SK-N-SH (cell line): ENCODE measurements at regions of chr4 and their contacts with region 1.

Region 1: GRCh38 chr4:139887962-139888735 is 222.5 kb downstream of the MGST2 start:
- DNase-seq: peak; percentile 23
- H3K4me3 ChIP-seq: peak overlapping the region in 1 of 2 experiments; percentile 22; a peak in 1 of 4 replicates
- H3K27ac ChIP-seq: peak overlapping the region; percentile 54 to 98
- H3K4me1 ChIP-seq: peaks cover 36 to 37% of the 10 kb centered on the region in 2 experiments
- H3K27me3 ChIP-seq: no peaks in the 10 kb centered on the region
- CTCF ChIP-seq: no peak
- EP300 ChIP-seq: no peak; a peak in 1 of 4 replicates
- RAD21 ChIP-seq: no peak

Region 2: GRCh38 chr4:139866276-139866962 is 21.7 kb before region 1 on chr4:
- CTCF ChIA-PET with region 1: no interaction called
- POLR2A ChIA-PET with region 1: interaction called, 20 read pairs
- DNase-seq: peak; percentile 65
- H3K4me3 ChIP-seq: no peak overlapping the region; a peak in 1 of 4 replicates
- H3K27ac ChIP-seq: peak overlapping the region; percentile 11 to 99; a peak in 3 of 4 replicates
- H3K4me1 ChIP-seq: peaks cover 1 to 25% of the 10 kb centered on the region in 2 experiments; a peak in 2 of 4 replicates
- H3K27me3 ChIP-seq: no peaks in the 10 kb centered on the region
- CTCF ChIP-seq: no peak
- EP300 ChIP-seq: peak in 1 of 2 experiments; percentile 90; a peak in 2 of 4 replicates
- RAD21 ChIP-seq: peak; percentile 38; the same call in 1 of the 2 replicates

Region 3: DNA sequence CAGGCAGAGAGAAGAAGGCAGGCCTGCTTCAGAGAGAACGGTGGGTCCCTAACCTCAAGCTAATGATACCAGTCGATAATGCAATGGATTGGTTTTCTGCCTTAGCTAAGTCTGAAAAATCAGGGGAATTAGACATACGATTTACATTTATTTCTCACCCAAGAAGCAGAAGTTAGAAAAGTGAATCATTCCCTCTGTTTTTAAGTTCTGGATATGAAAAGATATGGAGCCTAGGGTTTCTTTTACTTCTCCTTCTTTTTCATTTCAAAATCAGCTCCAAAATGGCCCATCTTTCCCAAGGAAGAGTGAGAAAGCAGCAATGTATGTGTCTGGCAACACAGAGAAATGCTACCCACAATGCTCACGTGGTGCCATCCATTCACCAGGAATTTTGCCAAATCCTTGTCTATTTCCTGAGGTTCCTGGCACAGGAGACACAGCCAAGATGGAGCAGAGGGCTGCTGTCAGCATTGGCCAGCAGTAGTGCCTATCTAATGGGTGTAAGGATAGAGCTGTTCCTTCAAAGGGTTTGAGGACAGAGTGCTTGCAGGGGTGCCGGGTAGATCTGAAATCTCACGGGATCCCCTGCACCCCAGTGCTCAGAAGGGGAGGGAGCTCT is 34.4 kb after region 1 on chr4:
- CTCF ChIA-PET with region 1: interaction called, 3 read pairs
- POLR2A ChIA-PET with region 1: interaction called, 10 read pairs
- DNase-seq: no peak
- H3K4me3 ChIP-seq: no peak overlapping the region; a peak in 1 of 4 replicates
- H3K27ac ChIP-seq: peak overlapping the region; percentile 78 to 90
- H3K4me1 ChIP-seq: peaks cover 38 to 51% of the 10 kb centered on the region in 2 experiments
- H3K27me3 ChIP-seq: no peaks in the 10 kb centered on the region
- CTCF ChIP-seq: no peak
- EP300 ChIP-seq: no peak; a peak in 1 of 4 replicates
- RAD21 ChIP-seq: no peak

Region 4: DNA sequence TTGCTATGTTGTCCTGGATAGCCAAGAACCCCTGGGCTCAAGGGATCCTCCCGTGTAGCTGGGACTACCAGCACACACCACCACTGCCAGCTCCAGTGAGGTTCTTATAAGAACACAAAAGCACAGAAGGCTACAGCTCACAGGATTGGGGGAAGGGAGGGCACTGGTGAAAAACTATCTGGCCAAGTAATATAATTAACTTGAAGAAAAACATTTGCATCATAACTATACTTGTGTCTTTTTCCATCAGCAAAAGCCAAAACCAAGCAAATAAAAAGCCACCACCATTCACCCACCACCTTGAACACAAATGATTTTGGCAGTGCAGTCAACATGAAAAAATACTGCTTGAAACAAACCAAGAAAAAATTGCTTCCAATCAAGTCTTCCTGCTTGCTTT is 77.6 kb after region 1 on chr4:
- CTCF ChIA-PET with region 1: no interaction called
- POLR2A ChIA-PET with region 1: interaction called, 11 read pairs
- DNase-seq: no peak
- H3K4me3 ChIP-seq: no peak overlapping the region
- H3K27ac ChIP-seq: peak overlapping the region in 1 of 2 experiments; percentile 100; a peak in 2 of 4 replicates
- H3K4me1 ChIP-seq: peaks cover 10 to 52% of the 10 kb centered on the region in 2 experiments; a peak in 3 of 4 replicates
- H3K27me3 ChIP-seq: no peaks in the 10 kb centered on the region
- CTCF ChIP-seq: no peak
- EP300 ChIP-seq: peak in 1 of 2 experiments; percentile 31; a peak in 1 of 4 replicates
- RAD21 ChIP-seq: peak; percentile 7; the same call in 1 of the 2 replicates

Region 5: GRCh38 chr4:140252742-140253555 is 364.8 kb after region 1 on chr4:
- CTCF ChIA-PET with region 1: interaction called, 3 read pairs
- POLR2A ChIA-PET with region 1: interaction called, 13 read pairs
- DNase-seq: peak; percentile 94
- H3K4me3 ChIP-seq: peak overlapping the region; percentile 47 to 55
- H3K27ac ChIP-seq: peak overlapping the region; percentile 78 to 92
- H3K4me1 ChIP-seq: peaks cover 49 to 57% of the 10 kb centered on the region in 2 experiments
- H3K27me3 ChIP-seq: no peaks in the 10 kb centered on the region
- CTCF ChIP-seq: peak; percentile 87
- EP300 ChIP-seq: peak in 1 of 2 experiments; percentile 40; a peak in 1 of 4 replicates
- RAD21 ChIP-seq: peak; percentile 85